ENCODE measurements at regions of chr3 and their contacts with region 1.

Region 1: GRCh38 chr3:77093101-77093500 is 53.2 kb downstream of the ROBO2 start:
- DNase-seq: no peak
- ATAC-seq: no peak
- H3K4me3 Mint-ChIP-seq: no peak overlapping the region
- H3K27ac Mint-ChIP-seq: no peak overlapping the region
- H3K4me1 Mint-ChIP-seq: no peaks in the 10 kb centered on the region
- H3K27me3 Mint-ChIP-seq: no peaks in the 10 kb centered on the region

Region 2: DNA sequence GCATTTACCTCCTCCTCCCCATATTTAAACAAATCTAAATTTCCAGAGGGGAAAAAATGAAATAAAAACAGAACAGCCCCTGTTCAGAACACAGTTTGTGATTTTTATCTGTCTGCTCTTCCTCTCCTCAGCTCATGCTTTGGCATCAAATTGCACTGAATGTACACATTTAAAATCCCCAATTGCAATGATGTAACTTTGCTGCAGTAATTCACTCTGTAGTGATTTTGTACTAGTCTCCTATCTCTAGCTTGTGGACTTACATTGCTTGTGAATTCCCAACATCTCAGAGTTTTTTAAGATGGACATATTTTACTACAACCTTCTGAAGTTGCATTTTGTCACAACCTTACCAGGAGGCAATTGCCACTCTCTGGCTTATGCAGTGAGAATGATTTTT is 134.8 kb before region 1 on chr3:
- CTCF ChIA-PET with region 1: no interaction called
- POLR2A ChIA-PET with region 1: no interaction called
- intact Hi-C with region 1: loop called in 1 of 2 experiments (anchors 5 kb)
- DNase-seq: no peak
- ATAC-seq: no peak
- H3K4me3 Mint-ChIP-seq: no peak overlapping the region
- H3K27ac Mint-ChIP-seq: no peak overlapping the region
- H3K4me1 Mint-ChIP-seq: no peaks in the 10 kb centered on the region
- H3K27me3 Mint-ChIP-seq: no peaks in the 10 kb centered on the region

Measured in activated CD4-positive, alpha-beta T cell treated with anti-CD3 and anti-CD28 coated beads for 36 hours (primary cell).